ENCODE measurements at regions of chr9 and their contacts with region 1.

Region 1: GRCh38 chr9:127224178-127224882 is 40.2 kb upstream of the GARNL3 start:
- DNase-seq: peak; percentile 93 to 98 (median 96)
- ATAC-seq: peak; percentile 92
- H3K4me3 ChIP-seq: peak overlapping the region; percentile 86
- H3K27ac ChIP-seq: peak overlapping the region; percentile 89
- H3K4me1 ChIP-seq: no peaks in the 10 kb centered on the region
- H3K27me3 ChIP-seq: no peaks in the 10 kb centered on the region

Region 2: DNA sequence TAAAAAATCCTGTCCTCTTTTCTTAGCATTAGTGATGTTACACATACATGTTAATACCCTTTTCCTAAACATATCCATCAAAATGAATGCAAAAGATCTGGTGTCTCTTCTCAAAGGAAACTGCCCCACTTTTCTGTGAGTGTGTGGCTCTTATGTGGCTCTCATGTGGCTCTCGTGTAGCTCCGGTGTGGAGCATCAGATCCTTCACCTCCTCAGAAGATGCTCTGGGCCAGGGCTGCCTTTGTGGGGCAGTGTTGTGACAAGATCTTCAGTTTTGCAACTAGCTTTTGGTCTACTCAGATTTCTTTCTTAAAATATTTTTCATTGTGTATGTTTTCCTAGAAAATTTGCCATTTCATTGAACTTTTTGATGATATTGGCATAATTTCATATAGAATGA is 59.6 kb after region 1 on chr9:
- intact Hi-C with region 1: loop called in 1 of 4 experiments (anchors 10 kb)
- DNase-seq: peak in 2 of 3 donors; percentile 52 to 53
- ATAC-seq: peak in 1 of 2 donors; percentile 41
- H3K4me3 ChIP-seq: no peak overlapping the region
- H3K27ac ChIP-seq: no peak overlapping the region
- H3K4me1 ChIP-seq: peaks cover 10% of the 10 kb centered on the region
- H3K27me3 ChIP-seq: no peaks in the 10 kb centered on the region

Region 3: DNA sequence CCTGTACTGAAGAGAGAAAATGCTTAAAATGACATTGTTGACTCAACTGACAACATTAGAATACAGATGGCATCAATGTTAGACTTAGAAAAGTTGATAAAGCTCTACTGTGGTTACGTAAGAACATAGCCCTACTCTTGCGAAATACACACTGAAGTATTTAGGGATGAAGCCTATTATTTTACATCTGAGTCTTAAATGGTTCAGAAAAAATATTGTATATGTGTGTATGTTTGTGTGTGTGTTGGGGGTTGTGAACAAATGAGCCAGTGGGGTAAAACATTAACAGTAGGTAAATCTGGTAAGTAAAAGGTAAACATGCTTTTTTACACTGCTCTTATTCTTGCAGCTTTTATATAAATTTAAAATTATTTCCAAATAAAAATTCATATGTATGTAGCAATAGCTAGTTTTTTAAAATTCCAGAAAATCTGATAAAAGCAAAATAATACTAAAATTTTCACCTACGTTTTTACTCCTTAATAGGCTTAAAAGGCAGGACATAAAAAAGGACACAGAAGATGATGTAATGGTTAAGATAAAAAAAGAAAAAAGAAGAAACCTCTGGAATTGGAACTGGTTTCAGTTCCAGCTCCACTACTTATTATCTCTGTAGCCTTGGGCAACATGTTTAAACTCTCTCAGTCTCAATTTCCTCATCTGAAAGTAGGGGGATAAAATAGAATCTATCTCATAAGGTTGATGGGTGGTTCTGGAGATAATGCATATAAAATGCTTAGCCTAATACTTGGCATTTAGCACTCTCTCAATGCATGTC is 84.5 kb after region 1 on chr9:
- intact Hi-C with region 1: no loop called
- DNase-seq: no peak
- ATAC-seq: peak; percentile 48 to 53
- H3K4me3 ChIP-seq: no peak overlapping the region
- H3K27ac ChIP-seq: no peak overlapping the region
- H3K4me1 ChIP-seq: peaks cover 5% of the 10 kb centered on the region
- H3K27me3 ChIP-seq: no peaks in the 10 kb centered on the region

Region 4: GRCh38 chr9:127347831-127348779 is 123.8 kb after region 1 on chr9:
- intact Hi-C with region 1: loop called in 3 of 4 experiments (anchors 5 to 10 kb)
- DNase-seq: no peak
- ATAC-seq: peak in 1 of 2 donors; percentile 81
- H3K4me3 ChIP-seq: no peak overlapping the region
- H3K27ac ChIP-seq: no peak overlapping the region
- H3K4me1 ChIP-seq: peaks cover 3% of the 10 kb centered on the region
- H3K27me3 ChIP-seq: no peaks in the 10 kb centered on the region

Region 5: DNA sequence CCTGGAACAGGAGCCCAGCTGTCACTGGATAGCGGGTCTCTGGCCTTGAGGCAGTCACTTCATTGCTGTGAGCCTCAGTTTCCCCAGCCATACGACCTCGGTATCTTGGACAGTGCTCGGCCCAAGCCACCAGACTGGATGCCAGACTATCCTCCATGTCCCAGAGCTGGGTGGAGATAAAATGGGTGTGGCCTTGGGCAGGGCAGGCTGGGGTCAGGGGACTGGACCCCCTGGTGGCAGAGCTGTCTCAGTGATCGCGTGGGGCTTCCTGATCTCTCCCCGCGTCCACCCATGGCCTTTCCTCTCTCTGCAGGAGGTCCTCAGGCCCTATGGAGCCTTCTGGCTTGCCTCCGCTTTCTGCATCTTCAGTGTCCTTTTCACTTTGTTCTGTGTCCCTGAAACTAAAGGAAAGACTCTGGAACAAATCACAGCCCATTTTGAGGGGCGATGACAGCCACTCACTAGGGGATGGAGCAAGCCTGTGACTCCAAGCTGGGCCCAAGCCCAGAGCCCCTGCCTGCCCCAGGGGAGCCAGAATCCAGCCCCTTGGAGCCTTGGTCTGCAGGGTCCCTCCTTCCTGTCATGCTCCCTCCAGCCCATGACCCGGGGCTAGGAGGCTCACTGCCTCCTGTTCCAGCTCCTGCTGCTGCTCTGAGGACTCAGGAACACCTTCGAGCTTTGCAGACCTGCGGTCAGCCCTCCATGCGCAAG is 182.6 kb after region 1 on chr9:
- intact Hi-C with region 1: loop called in 1 of 4 experiments (anchors 10 kb)
- DNase-seq: no peak
- ATAC-seq: peak in 1 of 2 donors; percentile 36
- H3K4me3 ChIP-seq: no peak overlapping the region
- H3K27ac ChIP-seq: no peak overlapping the region
- H3K4me1 ChIP-seq: peaks cover 10% of the 10 kb centered on the region
- H3K27me3 ChIP-seq: no peaks in the 10 kb centered on the region

Region 6: DNA sequence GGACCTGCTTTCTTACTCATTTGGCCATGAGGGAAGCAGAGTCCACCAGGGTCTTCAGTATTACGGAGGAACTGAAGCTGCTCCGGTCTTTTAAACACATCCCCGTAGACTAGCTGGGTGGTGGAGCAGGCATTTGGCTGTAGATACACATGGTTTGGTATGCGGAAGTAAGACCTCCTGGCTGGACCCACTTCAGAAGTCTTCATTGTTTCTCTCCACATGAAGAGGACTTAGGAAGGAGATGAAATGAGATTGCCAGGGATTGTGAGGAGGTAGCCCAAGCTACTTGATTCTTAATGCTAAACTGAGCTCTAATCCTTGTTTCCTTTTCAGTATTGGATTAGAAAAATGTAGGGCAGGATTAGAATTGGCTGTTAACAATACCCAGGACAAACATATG is 420.6 kb after region 1 on chr9:
- intact Hi-C with region 1: no loop called
- DNase-seq: no peak
- ATAC-seq: peak in 1 of 2 donors; percentile 39
- H3K4me3 ChIP-seq: no peak overlapping the region
- H3K27ac ChIP-seq: no peak overlapping the region
- H3K4me1 ChIP-seq: peaks cover 5% of the 10 kb centered on the region
- H3K27me3 ChIP-seq: no peaks in the 10 kb centered on the region

Measured in right cardiac atrium (tissue), 5 donors.